K562 (cell line): ENCODE measurements at regions of chr5 and their contacts with region 1.

Region 1: GRCh38 chr5:1105350-1106265 is 6.3 kb downstream of the SLC12A7 start:
- DNase-seq: peak; percentile 76 to 92 (median 85)
- ATAC-seq: peak; percentile 93
- H3K4me3 ChIP-seq: no peak overlapping the region
- H3K27ac ChIP-seq: 0 out of 3 replicates have a peak overlapping the region, but pooled peaks have one; percentile 9
- H3K4me1 ChIP-seq: peaks cover 50 to 100% of the 10 kb centered on the region in 2 experiments; a peak in 4 of 5 replicates
- H3K27me3 ChIP-seq: peaks cover 0 to 17% of the 10 kb centered on the region in 2 experiments; a peak in 3 of 5 replicates
- CTCF ChIP-seq: no peak
- EP300 ChIP-seq: peak; percentile 78; the same call in 1 of the 2 replicates
- POLR2A ChIP-seq: no peak
- RAD21 ChIP-seq: no peak

Region 2: GRCh38 chr5:989961-990530 is 115.6 kb before region 1 on chr5:
- CTCF ChIA-PET with region 1: no interaction called
- POLR2A ChIA-PET with region 1: no interaction called
- in situ Hi-C with region 1: no loop called
- intact Hi-C with region 1: no loop called
- DNase-seq: peak in 2 of 4 experiments; percentile 50 to 65
- ATAC-seq: peak; percentile 85
- H3K4me3 ChIP-seq: no peak overlapping the region
- H3K27ac ChIP-seq: no peak overlapping the region
- H3K4me1 ChIP-seq: no peaks in the 10 kb centered on the region; a peak in 1 of 5 replicates
- H3K27me3 ChIP-seq: peaks cover 7 to 43% of the 10 kb centered on the region in 2 experiments; a peak in 3 of 5 replicates
- CTCF ChIP-seq: peak; percentile 66 to 79 (median 66)
- EP300 ChIP-seq: no peak
- POLR2A ChIP-seq: no peak
- RAD21 ChIP-seq: peak; percentile 87 to 89

Region 3: GRCh38 chr5:1093361-1093760 is 12.2 kb before region 1 on chr5:
- CTCF ChIA-PET with region 1: no interaction called
- POLR2A ChIA-PET with region 1: interaction called, 10 read pairs
- in situ Hi-C with region 1: no loop called
- intact Hi-C with region 1: no loop called
- DNase-seq: peak in 1 of 4 experiments; percentile 44
- ATAC-seq: peak; percentile 26
- H3K4me3 ChIP-seq: no peak overlapping the region
- H3K27ac ChIP-seq: no peak overlapping the region
- H3K4me1 ChIP-seq: peaks cover 0 to 71% of the 10 kb centered on the region in 2 experiments; a peak in 2 of 5 replicates
- H3K27me3 ChIP-seq: peaks cover 11 to 75% of the 10 kb centered on the region in 2 experiments; a peak in 4 of 5 replicates
- CTCF ChIP-seq: no peak
- EP300 ChIP-seq: no peak
- POLR2A ChIP-seq: no peak
- RAD21 ChIP-seq: no peak

Region 4: GRCh38 chr5:1167728-1168709 is 62.4 kb after region 1 on chr5:
- CTCF ChIA-PET with region 1: no interaction called
- POLR2A ChIA-PET with region 1: no interaction called
- in situ Hi-C with region 1: no loop called
- intact Hi-C with region 1: no loop called
- DNase-seq: peak; percentile 71 to 81 (median 75)
- ATAC-seq: peak; percentile 91
- H3K4me3 ChIP-seq: no peak overlapping the region
- H3K27ac ChIP-seq: no peak overlapping the region
- H3K4me1 ChIP-seq: peaks cover 2 to 34% of the 10 kb centered on the region in 2 experiments; a peak in 3 of 5 replicates
- H3K27me3 ChIP-seq: peaks cover 10 to 51% of the 10 kb centered on the region in 2 experiments
- CTCF ChIP-seq: peak; percentile 82 to 94 (median 90)
- EP300 ChIP-seq: no peak
- POLR2A ChIP-seq: no peak
- RAD21 ChIP-seq: peak; percentile 93 to 98